Endothelial cell of umbilical vein (primary cell): ENCODE measurements at regions of chr1 and their contacts with region 1.

Region 1: DNA sequence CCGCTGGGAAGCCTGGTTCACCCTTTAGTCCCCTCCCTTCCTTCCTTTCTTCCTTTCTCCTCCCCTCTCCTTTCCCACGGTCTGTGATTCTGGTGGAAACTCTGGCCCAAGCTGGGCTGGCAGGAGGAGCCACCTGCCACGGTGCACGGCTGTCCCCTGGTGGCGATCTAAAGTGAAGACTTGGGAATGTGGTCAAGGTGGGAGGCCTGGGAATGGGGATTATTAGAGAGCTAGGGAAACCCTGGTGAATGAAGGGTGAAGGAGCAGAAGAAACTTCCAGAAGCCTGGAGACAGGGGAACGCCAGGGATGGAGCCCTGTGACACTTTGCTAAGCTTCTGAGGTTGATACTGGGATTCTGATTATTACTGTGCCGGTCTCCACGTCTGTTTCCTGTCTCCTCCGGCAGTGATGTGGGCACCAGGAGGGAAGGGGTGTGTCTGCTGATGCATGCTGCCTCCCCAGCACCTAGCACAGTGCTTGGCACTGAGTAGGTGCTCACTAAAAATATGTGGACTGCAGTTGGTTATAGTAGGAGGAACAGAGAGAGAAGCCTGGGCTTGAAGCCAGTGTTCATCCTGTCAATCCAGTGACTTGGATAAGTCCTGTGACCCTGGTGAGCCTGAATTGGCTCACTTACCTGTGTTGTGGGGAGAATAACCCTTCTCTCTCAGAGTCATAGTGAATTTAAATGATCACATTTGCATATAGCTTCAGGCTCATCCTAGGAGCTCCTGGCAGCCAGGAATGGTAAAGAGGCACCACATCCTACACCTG is 71.2 kb upstream of the NBPF3 start:
- DNase-seq: peak; percentile 92
- H3K4me3 ChIP-seq: no peak overlapping the region
- H3K27ac ChIP-seq: no peak overlapping the region
- H3K4me1 ChIP-seq: peaks cover 7% of the 10 kb centered on the region
- H3K27me3 ChIP-seq: no peaks in the 10 kb centered on the region
- CTCF ChIP-seq: peak; percentile 97 to 98
- POLR2A ChIP-seq: no peak

Region 2: GRCh38 chr1:21225065-21225464 is 143.6 kb before region 1 on chr1:
- CTCF ChIA-PET with region 1: interaction called, 18 read pairs
- POLR2A ChIA-PET with region 1: no interaction called
- dilution Hi-C with region 1: no loop called
- intact Hi-C with region 1: no loop called
- DNase-seq: no peak
- H3K4me3 ChIP-seq: no peak overlapping the region
- H3K27ac ChIP-seq: no peak overlapping the region
- H3K4me1 ChIP-seq: peaks cover 6% of the 10 kb centered on the region
- H3K27me3 ChIP-seq: no peaks in the 10 kb centered on the region
- CTCF ChIP-seq: no peak
- POLR2A ChIP-seq: no peak

Region 3: GRCh38 chr1:21261551-21262281 is 107.0 kb before region 1 on chr1:
- CTCF ChIA-PET with region 1: interaction called, 301 read pairs
- POLR2A ChIA-PET with region 1: no interaction called
- dilution Hi-C with region 1: no loop called
- intact Hi-C with region 1: loop called (anchors 2 kb)
- DNase-seq: peak; percentile 96
- H3K4me3 ChIP-seq: no peak overlapping the region
- H3K27ac ChIP-seq: peak overlapping the region; percentile 92
- H3K4me1 ChIP-seq: peaks cover 54% of the 10 kb centered on the region
- H3K27me3 ChIP-seq: no peaks in the 10 kb centered on the region
- CTCF ChIP-seq: no peak
- POLR2A ChIP-seq: peak; percentile 44

Region 4: DNA sequence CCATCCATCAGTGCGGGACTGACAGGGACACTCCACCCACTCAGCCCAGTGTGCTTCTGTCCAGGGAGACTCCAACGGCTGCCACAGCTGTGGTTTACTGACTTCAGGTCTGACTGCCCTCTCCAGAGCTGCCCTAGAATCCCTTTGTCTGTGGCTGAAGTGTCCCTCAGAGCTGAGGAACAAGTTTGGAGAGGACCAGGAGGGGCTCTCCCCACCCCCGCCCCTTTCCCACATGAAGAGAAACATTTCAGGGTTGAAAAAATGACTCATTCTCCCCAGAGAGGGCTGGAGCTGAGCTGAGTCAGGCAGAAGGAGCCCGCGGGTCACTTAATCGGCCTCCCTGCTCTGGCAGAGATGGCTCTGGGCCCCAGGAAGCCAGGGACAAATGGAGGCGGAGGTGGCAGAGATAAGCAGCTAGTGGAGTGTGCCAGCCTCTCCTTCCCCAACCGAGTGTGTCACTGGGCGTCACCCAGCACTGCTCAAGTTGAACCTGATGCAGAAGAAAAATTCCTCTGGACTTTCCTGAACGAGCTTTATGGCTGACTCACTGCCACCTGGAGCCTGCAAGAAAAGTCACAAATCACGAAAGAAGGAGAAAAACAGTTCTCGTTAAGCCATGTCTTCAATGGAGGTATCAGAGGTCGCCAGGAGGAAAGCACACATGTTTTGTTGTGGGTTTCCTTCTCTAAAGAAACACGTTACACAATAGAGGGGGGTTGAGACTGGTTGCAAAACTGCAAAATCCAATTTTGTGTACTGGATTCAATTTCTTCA is 44.1 kb before region 1 on chr1:
- CTCF ChIA-PET with region 1: interaction called, 14 read pairs
- POLR2A ChIA-PET with region 1: no interaction called
- dilution Hi-C with region 1: no loop called
- intact Hi-C with region 1: loop called (anchors 1 kb)
- DNase-seq: peak; percentile 93
- H3K4me3 ChIP-seq: no peak overlapping the region
- H3K27ac ChIP-seq: peak overlapping the region; percentile 96
- H3K4me1 ChIP-seq: peaks cover 62% of the 10 kb centered on the region
- H3K27me3 ChIP-seq: no peaks in the 10 kb centered on the region
- CTCF ChIP-seq: no peak
- POLR2A ChIP-seq: peak; percentile 39

Region 5: DNA sequence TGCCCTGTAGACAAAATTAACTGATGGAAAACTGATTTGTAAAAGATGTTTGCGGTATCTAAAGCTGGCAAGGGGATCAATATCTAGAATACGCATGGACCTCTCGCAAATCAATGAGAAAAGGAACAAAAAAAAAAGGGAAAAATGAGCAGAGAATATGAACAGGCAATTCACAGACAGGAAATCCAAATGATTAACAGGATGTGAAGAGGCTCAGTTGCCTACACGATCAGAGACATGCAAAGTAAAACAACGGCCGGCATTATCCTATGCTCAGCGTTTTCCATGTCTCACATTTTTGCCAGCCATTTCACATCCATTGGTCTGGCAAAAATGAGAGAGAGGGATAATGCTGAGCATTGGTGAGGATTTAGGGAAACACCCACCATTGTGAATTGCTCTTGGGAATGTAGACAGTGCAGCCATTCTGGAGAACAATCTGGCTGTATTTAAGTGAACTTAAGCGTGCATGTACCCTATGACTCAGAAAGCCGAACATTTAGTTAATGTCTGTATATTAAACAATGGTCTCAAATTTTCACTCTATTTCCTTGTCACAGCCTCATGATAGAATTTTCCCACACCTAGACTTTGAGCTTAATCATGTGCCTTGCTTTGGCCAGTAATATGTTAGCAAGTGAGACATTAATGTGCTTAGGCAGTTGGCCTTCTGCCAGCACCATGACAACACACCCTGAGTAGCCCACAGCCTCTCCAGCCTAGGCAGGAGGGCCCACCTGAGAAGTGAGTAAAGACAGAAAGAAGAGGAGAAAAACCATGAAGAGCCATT is 10.2 kb after region 1 on chr1:
- CTCF ChIA-PET with region 1: interaction called, 12 read pairs
- POLR2A ChIA-PET with region 1: no interaction called
- dilution Hi-C with region 1: no loop called
- intact Hi-C with region 1: no loop called
- DNase-seq: no peak
- H3K4me3 ChIP-seq: no peak overlapping the region
- H3K27ac ChIP-seq: no peak overlapping the region
- H3K4me1 ChIP-seq: no peaks in the 10 kb centered on the region
- H3K27me3 ChIP-seq: peaks cover 13% of the 10 kb centered on the region in 2 experiments
- CTCF ChIP-seq: no peak
- POLR2A ChIP-seq: no peak

Region 6: GRCh38 chr1:21447311-21447710 is 78.6 kb after region 1 on chr1:
- CTCF ChIA-PET with region 1: no interaction called
- POLR2A ChIA-PET with region 1: no interaction called
- dilution Hi-C with region 1: no loop called
- intact Hi-C with region 1: no loop called
- DNase-seq: no peak
- H3K4me3 ChIP-seq: no peak overlapping the region
- H3K27ac ChIP-seq: no peak overlapping the region
- H3K4me1 ChIP-seq: no peaks in the 10 kb centered on the region
- H3K27me3 ChIP-seq: no peaks in the 10 kb centered on the region
- CTCF ChIP-seq: no peak
- POLR2A ChIP-seq: no peak

Region 7: DNA sequence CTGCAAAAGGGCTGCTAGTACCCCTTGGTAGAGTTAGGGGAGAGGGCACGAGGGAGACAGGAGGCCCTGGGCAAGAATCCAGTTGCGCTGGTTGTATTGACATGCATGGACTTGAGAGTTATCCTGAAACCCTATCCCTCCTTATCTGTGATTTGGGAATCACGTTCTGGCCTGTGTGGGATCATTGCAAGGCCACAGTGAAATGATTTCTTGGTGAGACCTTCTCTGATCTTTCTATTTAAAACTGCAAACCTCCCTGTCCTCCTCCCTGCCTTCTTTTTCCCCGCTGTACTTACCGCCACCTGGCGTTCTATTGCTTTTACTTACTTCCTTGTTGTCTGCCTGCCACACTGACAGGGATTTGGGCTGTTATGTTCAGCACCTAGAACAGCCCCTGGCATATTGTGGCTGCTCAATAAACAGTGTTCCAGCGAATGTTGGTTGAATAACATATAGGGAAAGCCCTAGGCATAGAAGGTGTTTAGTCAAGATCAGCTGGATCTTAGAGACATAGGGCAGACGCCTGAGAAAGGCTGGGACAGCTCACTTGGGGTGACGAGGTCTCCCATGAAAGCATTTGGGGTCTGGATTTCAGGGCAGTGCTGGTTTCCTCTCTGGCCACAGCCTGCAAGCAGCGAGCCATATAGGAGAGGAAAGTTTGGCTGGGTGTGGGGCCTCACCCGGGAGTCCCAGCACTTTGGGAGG is 166.1 kb after region 1 on chr1:
- CTCF ChIA-PET with region 1: interaction called, 34 read pairs
- POLR2A ChIA-PET with region 1: no interaction called
- dilution Hi-C with region 1: no loop called
- intact Hi-C with region 1: no loop called
- DNase-seq: peak; percentile 34
- H3K4me3 ChIP-seq: no peak overlapping the region
- H3K27ac ChIP-seq: no peak overlapping the region
- H3K4me1 ChIP-seq: no peaks in the 10 kb centered on the region
- H3K27me3 ChIP-seq: peaks cover 29 to 34% of the 10 kb centered on the region in 2 experiments
- CTCF ChIP-seq: peak; percentile 35 to 46
- POLR2A ChIP-seq: no peak

Region 8: DNA sequence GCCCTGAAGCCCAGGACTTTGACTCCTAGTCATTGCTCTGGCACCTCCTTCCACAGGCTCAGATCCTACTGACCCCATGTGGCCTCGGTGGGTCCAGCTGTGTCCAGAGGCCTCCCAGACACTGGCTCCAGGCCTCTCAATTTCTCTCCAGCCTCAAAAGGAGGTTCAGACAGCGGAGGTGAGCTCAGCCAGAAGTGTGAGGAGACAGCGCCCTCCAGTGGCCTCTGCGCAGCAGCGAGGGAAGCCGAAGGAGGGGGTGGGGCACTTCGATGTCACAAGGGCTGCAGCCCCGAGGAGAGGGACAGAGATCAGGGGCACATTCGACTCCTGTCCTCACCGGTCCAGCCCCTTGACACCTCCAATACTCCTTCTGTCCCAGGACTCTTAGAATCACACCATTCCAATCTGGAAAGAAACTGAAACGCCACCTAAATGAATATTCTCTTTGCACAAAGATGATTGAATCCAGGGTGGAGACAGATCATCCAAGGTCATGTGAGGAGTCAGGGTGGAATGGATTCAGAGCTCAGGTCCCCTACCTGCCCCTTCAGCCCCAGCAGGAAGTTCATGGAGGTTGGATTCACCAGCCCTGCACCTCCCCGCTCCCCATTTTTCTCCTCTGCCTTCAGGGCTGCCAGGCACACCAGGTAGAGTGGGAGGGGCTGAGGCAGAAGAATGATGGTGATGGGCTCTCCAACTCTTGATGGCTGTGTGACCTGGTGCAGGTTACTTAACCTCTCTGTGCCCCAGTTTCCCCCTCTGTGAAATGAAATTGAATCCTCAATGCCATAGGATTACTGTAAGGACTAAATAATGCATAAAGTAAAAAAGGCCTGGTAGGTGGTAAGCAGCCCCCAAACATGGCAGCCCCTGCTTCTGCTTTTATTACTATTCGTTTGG is 1048.1 kb after region 1 on chr1:
- CTCF ChIA-PET with region 1: interaction called, 8 read pairs
- POLR2A ChIA-PET with region 1: no interaction called
- dilution Hi-C with region 1: no loop called
- intact Hi-C with region 1: loop called (anchors 2 kb)
- DNase-seq: peak; percentile 79
- H3K4me3 ChIP-seq: no peak overlapping the region
- H3K27ac ChIP-seq: no peak overlapping the region
- H3K4me1 ChIP-seq: peaks cover 24% of the 10 kb centered on the region
- H3K27me3 ChIP-seq: peaks cover 15 to 18% of the 10 kb centered on the region in 2 experiments
- CTCF ChIP-seq: peak; percentile 93 to 97
- POLR2A ChIP-seq: no peak